B cell (primary cell): ENCODE measurements at regions of chr13 and their contacts with region 1.

Region 1: DNA sequence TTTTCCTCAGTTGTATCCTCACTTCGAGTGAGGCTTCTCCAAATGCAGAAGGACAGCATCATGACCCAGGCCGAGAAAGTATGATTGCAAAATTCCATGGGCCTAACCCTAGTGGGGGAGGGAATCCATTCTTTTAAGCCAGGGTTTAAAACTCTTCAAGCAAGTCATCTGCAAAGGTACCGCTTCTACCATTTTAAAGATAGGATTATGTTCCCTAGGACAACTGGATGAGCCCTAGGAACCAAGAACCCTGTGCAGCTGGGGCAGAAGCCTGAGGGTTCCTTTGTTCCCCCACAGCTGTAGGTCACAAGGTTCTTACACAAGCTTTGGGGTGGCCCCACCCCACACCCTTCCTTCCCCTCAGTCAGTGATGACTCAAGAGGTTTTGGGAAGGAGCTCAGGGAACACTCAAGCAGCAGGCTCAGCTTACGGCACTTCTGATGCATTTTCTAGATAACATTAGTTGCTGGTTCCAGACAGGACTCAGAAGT is 13.5 kb downstream of the ARL11 start:
- DNase-seq: no peak
- ATAC-seq: no peak
- H3K4me3 ChIP-seq: no peak overlapping the region
- H3K4me3 Mint-ChIP-seq: peak overlapping the region; percentile 39
- H3K27ac ChIP-seq: no peak overlapping the region
- H3K27ac Mint-ChIP-seq: peak overlapping the region; percentile 26
- H3K4me1 ChIP-seq: peaks cover 13 to 15% of the 10 kb centered on the region in 2 donors
- H3K4me1 Mint-ChIP-seq: peaks cover 37% of the 10 kb centered on the region
- H3K27me3 ChIP-seq: no peaks in the 10 kb centered on the region
- H3K27me3 Mint-ChIP-seq: no peaks in the 10 kb centered on the region
- CTCF ChIP-seq: no peak

Region 2: DNA sequence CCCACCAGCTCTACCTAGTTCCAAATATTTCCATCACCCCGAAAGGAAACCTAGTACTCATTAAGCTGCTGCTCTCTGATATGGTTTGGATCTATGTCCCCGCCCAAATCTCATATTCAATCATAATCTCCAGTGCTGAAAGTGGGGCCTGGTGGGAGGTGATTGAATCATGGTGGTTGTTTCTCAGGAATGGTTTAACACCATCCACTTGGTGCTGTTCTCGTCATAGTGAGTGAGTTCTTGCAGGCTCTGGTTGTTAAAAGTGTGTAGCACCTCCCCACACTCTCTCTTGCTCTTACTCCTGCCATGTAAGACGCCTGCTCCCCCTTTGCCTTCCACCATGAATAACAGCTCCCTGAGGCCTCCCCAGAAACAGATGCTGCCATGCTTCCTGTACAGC is 1503.6 kb before region 1 on chr13:
- CTCF ChIA-PET with region 1: no interaction called
- POLR2A ChIA-PET with region 1: interaction called, 14 read pairs
- intact Hi-C with region 1: no loop called
- DNase-seq: no peak
- ATAC-seq: no peak
- H3K4me3 ChIP-seq: no peak overlapping the region
- H3K4me3 Mint-ChIP-seq: no peak overlapping the region
- H3K27ac ChIP-seq: no peak overlapping the region
- H3K27ac Mint-ChIP-seq: no peak overlapping the region
- H3K4me1 ChIP-seq: peaks cover 8 to 13% of the 10 kb centered on the region in 2 donors
- H3K4me1 Mint-ChIP-seq: peaks cover 12% of the 10 kb centered on the region
- H3K27me3 ChIP-seq: peaks cover 0 to 2% (median 0%) of the 10 kb centered on the region in 4 experiments
- H3K27me3 Mint-ChIP-seq: peaks cover 6% of the 10 kb centered on the region
- CTCF ChIP-seq: no peak

Region 3: GRCh38 chr13:49627831-49628652 is 13.8 kb before region 1 on chr13 and contains the start of gene ARL11:
- CTCF ChIA-PET with region 1: no interaction called
- POLR2A ChIA-PET with region 1: interaction called, 4 read pairs
- intact Hi-C with region 1: loop called (anchors 2 kb)
- DNase-seq: peak; percentile 88
- ATAC-seq: peak; percentile 99
- H3K4me3 ChIP-seq: peak within 1 kb of the TSS; percentile 79 to 100 (median 90)
- H3K4me3 Mint-ChIP-seq: peak within 1 kb of the TSS; percentile 99
- H3K27ac ChIP-seq: peak within 1 kb of the TSS; percentile 61 to 78
- H3K27ac Mint-ChIP-seq: peak within 1 kb of the TSS; percentile 94
- H3K4me1 ChIP-seq: peaks cover 17 to 21% of the 10 kb centered on the region in 2 donors
- H3K4me1 Mint-ChIP-seq: peaks cover 44% of the 10 kb centered on the region
- H3K27me3 ChIP-seq: no peaks in the 10 kb centered on the region
- H3K27me3 Mint-ChIP-seq: no peaks in the 10 kb centered on the region
- CTCF ChIP-seq: no peak
- total RNA-seq, gene ARL11: 17.9 and 21.4 TPM in 2 replicates

Region 4: GRCh38 chr13:49652355-49653305 is 10.8 kb after region 1 on chr13:
- CTCF ChIA-PET with region 1: no interaction called
- POLR2A ChIA-PET with region 1: no interaction called
- intact Hi-C with region 1: no loop called
- DNase-seq: peak; percentile 43
- ATAC-seq: peak; percentile 65
- H3K4me3 ChIP-seq: no peak overlapping the region
- H3K4me3 Mint-ChIP-seq: no peak overlapping the region
- H3K27ac ChIP-seq: no peak overlapping the region
- H3K27ac Mint-ChIP-seq: no peak overlapping the region
- H3K4me1 ChIP-seq: no peaks in the 10 kb centered on the region
- H3K4me1 Mint-ChIP-seq: peaks cover 14% of the 10 kb centered on the region
- H3K27me3 ChIP-seq: no peaks in the 10 kb centered on the region
- H3K27me3 Mint-ChIP-seq: no peaks in the 10 kb centered on the region
- CTCF ChIP-seq: peak; percentile 47